ENCODE measurements at regions of chr21 and their contacts with region 1.

Region 1: DNA sequence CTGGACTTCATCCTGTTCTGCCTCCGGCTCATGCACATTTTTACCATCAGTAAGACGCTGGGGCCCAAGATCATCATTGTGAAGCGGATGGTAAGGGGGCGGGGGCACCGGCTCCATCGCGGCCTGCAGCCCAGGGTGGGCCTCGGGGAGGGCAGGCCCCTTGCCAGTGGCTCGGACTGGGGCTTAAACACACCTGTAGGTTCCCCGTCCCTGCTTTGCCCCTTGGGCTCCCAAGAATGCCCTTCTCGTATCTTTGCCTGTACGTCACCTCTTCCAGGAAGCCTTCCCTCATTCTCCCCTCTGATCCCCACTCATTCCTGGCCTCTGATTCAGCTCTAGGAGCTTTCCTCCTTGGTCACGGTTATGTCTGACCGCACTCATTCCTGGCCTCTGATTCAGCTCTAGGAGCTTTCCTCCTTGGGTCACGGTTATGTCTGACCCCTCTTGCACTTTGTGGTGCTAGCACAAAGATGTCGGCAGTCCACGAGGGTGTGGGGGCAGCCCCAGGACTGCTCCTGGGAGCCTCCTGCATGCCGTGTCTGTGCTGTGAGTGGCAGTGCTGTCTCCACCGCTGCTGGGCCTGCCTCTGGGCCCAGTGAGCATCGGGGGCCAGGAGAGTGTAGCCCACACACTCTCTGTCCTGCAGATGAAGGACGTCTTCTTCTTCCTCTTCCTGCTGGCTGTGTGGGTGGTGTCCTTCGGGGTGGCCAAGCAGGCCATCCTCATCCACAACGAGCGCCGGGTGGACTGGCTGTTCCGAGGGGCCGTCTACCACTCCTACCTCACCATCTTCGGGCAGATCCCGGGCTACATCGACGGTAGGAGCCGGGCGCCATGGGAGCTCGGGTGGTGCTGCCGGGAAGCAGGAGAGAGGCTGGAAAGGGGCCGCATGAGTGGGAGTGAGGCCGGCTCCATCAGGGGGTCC is 49.1 kb upstream of the LRRC3 start:
- DNase-seq: no peak
- ATAC-seq: no peak
- H3K4me3 ChIP-seq: no peak overlapping the region
- H3K4me3 Mint-ChIP-seq: no peak overlapping the region
- H3K27ac ChIP-seq: no peak overlapping the region
- H3K27ac Mint-ChIP-seq: peak overlapping the region in 3 of 9 donors; percentile 18 to 63 (median 52)
- H3K4me1 ChIP-seq: no peaks in the 10 kb centered on the region
- H3K4me1 Mint-ChIP-seq: peaks cover 0 to 5% (median 4%) of the 10 kb centered on the region in 7 donors
- H3K27me3 ChIP-seq: no peaks in the 10 kb centered on the region
- H3K27me3 Mint-ChIP-seq: no peaks in the 10 kb centered on the region

Region 2: DNA sequence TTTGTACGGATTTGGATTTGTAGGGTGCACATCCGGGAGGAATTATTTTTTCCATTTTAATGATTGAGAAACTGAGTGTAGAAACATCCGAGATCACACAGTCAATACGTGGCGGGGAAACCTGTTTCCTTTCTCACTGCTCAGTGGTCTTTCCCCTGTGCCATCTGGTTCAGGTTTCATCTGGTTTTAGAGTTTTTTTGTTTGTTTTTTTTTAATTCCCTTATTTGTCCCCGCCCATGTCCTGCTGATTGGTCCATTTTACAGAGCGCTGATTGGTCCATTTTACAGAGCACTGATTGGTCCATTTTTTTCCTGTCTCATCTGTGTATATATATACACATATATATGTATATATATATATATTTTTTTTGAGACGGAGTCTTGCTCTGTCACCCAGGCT is 46.8 kb before region 1 on chr21:
- CTCF ChIA-PET with region 1: no interaction called
- POLR2A ChIA-PET with region 1: no interaction called
- intact Hi-C with region 1: loop called in 1 of 2 experiments (anchors 2 kb)
- DNase-seq: no peak
- ATAC-seq: no peak
- H3K4me3 ChIP-seq: no peak overlapping the region
- H3K4me3 Mint-ChIP-seq: no peak overlapping the region
- H3K27ac ChIP-seq: no peak overlapping the region
- H3K27ac Mint-ChIP-seq: peak overlapping the region in 2 of 9 donors; percentile 24 to 29
- H3K4me1 ChIP-seq: peaks cover 0 to 14% of the 10 kb centered on the region in 2 donors
- H3K4me1 Mint-ChIP-seq: peaks cover 25 to 38% (median 28%) of the 10 kb centered on the region in 7 donors
- H3K27me3 ChIP-seq: no peaks in the 10 kb centered on the region
- H3K27me3 Mint-ChIP-seq: peaks cover 0 to 5% (median 0%) of the 10 kb centered on the region in 5 donors